MCF 10A (cell line): ENCODE measurements at regions of chr11 and their contacts with region 1.

Region 1: GRCh38 chr11:63838678-63839507 is at the start of gene MARK2:
- DNase-seq: peak; percentile 97
- H3K4me3 Mint-ChIP-seq: peak within 1 kb of the TSS; percentile 93
- H3K27ac Mint-ChIP-seq: peak within 1 kb of the TSS; percentile 73
- H3K4me1 Mint-ChIP-seq: peaks cover 40% of the 10 kb centered on the region
- H3K27me3 Mint-ChIP-seq: no peaks in the 10 kb centered on the region
- CTCF ChIP-seq: no peak
- total RNA-seq, gene MARK2: 36.9 and 39.8 TPM in 2 replicates

Region 2: GRCh38 chr11:63813035-63813562 is 25.8 kb before region 1 on chr11 and contains the start of gene SPINDOC:
- CTCF ChIA-PET with region 1: interaction called, 22 read pairs
- POLR2A ChIA-PET with region 1: interaction called, 8 read pairs
- intact Hi-C with region 1: no loop called
- DNase-seq: peak; percentile 68
- H3K4me3 Mint-ChIP-seq: peak within 1 kb of the TSS; percentile 75
- H3K27ac Mint-ChIP-seq: no peak within 1 kb of the TSS
- H3K4me1 Mint-ChIP-seq: peaks cover 26% of the 10 kb centered on the region
- H3K27me3 Mint-ChIP-seq: no peaks in the 10 kb centered on the region
- CTCF ChIP-seq: no peak
- total RNA-seq, gene SPINDOC: 17.1 and 21.4 TPM in 2 replicates

Region 3: GRCh38 chr11:63871962-63872799 is 33.3 kb after region 1 on chr11:
- CTCF ChIA-PET with region 1: interaction called, 94 read pairs
- POLR2A ChIA-PET with region 1: interaction called, 31 read pairs
- intact Hi-C with region 1: loop called (anchors 1 kb)
- DNase-seq: peak; percentile 97
- H3K4me3 Mint-ChIP-seq: peak overlapping the region; percentile 33
- H3K27ac Mint-ChIP-seq: no peak overlapping the region
- H3K4me1 Mint-ChIP-seq: peaks cover 32% of the 10 kb centered on the region
- H3K27me3 Mint-ChIP-seq: no peaks in the 10 kb centered on the region
- CTCF ChIP-seq: peak; percentile 16

Region 4: GRCh38 chr11:63938479-63939396 is 99.8 kb after region 1 on chr11 and contains the start of gene NAA40:
- CTCF ChIA-PET with region 1: interaction called, 241 read pairs
- POLR2A ChIA-PET with region 1: interaction called, 19 read pairs
- intact Hi-C with region 1: no loop called
- DNase-seq: peak; percentile 96
- H3K4me3 Mint-ChIP-seq: peak within 1 kb of the TSS; percentile 83
- H3K27ac Mint-ChIP-seq: peak within 1 kb of the TSS; percentile 69
- H3K4me1 Mint-ChIP-seq: no peaks in the 10 kb centered on the region
- H3K27me3 Mint-ChIP-seq: no peaks in the 10 kb centered on the region
- CTCF ChIP-seq: no peak
- total RNA-seq, gene NAA40: 11.7 and 13.4 TPM in 2 replicates

Region 5: GRCh38 chr11:63966444-63966843 is 127.6 kb after region 1 on chr11:
- CTCF ChIA-PET with region 1: interaction called, 12 read pairs
- POLR2A ChIA-PET with region 1: no interaction called
- intact Hi-C with region 1: no loop called
- DNase-seq: no peak
- H3K4me3 Mint-ChIP-seq: no peak overlapping the region
- H3K27ac Mint-ChIP-seq: no peak overlapping the region
- H3K4me1 Mint-ChIP-seq: peaks cover 5% of the 10 kb centered on the region
- H3K27me3 Mint-ChIP-seq: no peaks in the 10 kb centered on the region
- CTCF ChIP-seq: no peak